ENCODE measurements at regions of chr10 and their contacts with region 1.

Region 1: GRCh38 chr10:74081192-74081803 is 69.3 kb downstream of the AP3M1 start:
- DNase-seq: no peak
- ATAC-seq: peak; percentile 51
- H3K4me3 Mint-ChIP-seq: no peak overlapping the region
- H3K27ac Mint-ChIP-seq: no peak overlapping the region
- H3K4me1 Mint-ChIP-seq: peaks cover 44% of the 10 kb centered on the region
- H3K27me3 Mint-ChIP-seq: no peaks in the 10 kb centered on the region
- CTCF ChIP-seq: no peak

Region 2: DNA sequence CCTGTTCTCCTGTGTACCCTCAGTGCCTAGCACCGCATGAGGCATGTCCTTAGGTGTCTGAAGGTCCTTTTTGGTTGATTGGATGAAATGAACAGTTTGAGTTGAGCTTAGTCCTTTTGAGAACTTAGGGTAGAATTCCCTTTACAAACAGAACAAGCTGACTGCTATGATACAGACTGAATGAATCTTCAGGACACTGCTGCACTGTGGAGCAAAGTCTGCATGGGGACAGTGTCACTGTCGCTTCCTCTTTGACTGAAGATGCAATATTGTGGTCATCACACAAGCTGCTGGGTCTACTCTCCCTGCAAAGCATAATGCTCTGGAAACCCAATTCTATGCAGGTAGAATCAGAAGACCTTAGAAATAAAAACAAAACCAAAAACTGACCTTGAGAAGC is 178.9 kb before region 1 on chr10:
- CTCF ChIA-PET with region 1: no interaction called
- POLR2A ChIA-PET with region 1: no interaction called
- intact Hi-C with region 1: no loop called
- DNase-seq: no peak
- ATAC-seq: no peak
- H3K4me3 Mint-ChIP-seq: no peak overlapping the region
- H3K27ac Mint-ChIP-seq: no peak overlapping the region
- H3K4me1 Mint-ChIP-seq: peaks cover 5% of the 10 kb centered on the region
- H3K27me3 Mint-ChIP-seq: peaks cover 19% of the 10 kb centered on the region
- CTCF ChIP-seq: no peak

Region 3: GRCh38 chr10:73997787-73998622 is 83.3 kb before region 1 on chr10 and contains the start of gene VCL:
- CTCF ChIA-PET with region 1: interaction called, 4 read pairs
- POLR2A ChIA-PET with region 1: interaction called, 5 read pairs
- intact Hi-C with region 1: loop called (anchors 5 kb)
- DNase-seq: peak; percentile 91
- ATAC-seq: peak; percentile 97
- H3K4me3 Mint-ChIP-seq: peak within 1 kb of the TSS; percentile 96
- H3K27ac Mint-ChIP-seq: peak within 1 kb of the TSS; percentile 95
- H3K4me1 Mint-ChIP-seq: peaks cover 45% of the 10 kb centered on the region
- H3K27me3 Mint-ChIP-seq: no peaks in the 10 kb centered on the region
- CTCF ChIP-seq: no peak
- total RNA-seq, gene VCL: 21.3 and 25.8 TPM in 2 replicates

Region 4: DNA sequence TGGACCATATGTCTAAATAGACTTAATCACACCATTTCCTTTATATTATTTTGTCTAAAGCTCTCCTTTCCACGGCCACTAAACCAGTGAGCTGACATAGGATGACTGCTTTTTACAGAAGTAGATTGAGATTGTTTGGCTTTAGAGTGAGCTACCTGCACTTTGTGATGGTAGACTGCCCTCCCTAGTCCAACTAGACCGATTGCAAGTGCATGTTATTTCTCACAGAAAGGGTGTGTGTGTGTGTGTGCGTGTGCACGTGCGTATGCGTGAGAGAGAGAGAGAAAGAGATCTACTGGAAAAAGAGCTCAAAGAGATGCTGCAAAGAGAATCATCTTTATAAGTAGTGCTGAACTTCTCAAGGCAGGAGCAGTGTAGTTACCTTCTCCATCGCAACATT is 22.6 kb before region 1 on chr10:
- CTCF ChIA-PET with region 1: interaction called, 5 read pairs
- POLR2A ChIA-PET with region 1: interaction called, 3 read pairs
- intact Hi-C with region 1: loop called (anchors 2 kb)
- DNase-seq: no peak
- ATAC-seq: peak; percentile 73
- H3K4me3 Mint-ChIP-seq: no peak overlapping the region
- H3K27ac Mint-ChIP-seq: no peak overlapping the region
- H3K4me1 Mint-ChIP-seq: peaks cover 24% of the 10 kb centered on the region
- H3K27me3 Mint-ChIP-seq: no peaks in the 10 kb centered on the region
- CTCF ChIP-seq: no peak

Region 5: DNA sequence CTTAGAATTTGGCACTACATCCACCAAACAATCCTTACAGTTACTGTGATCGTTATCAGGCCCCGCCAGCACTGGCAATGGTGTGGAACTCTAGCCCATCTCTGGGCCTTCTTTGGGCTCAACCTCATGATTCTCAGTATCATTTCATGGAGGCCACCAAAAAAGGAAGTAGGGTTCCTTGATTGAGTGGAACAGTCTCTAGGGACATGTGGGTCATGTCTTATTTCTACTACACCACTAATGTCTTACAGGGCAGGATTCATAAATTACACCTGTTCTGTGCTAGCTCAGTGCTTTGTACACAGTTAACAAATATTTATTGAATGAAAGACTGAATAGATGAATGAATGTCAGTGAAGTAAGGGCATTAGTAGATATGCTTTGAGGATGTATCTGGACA is 15.5 kb after region 1 on chr10:
- CTCF ChIA-PET with region 1: interaction called, 4 read pairs
- POLR2A ChIA-PET with region 1: no interaction called
- intact Hi-C with region 1: loop called (anchors 2 kb)
- DNase-seq: no peak
- ATAC-seq: peak; percentile 98
- H3K4me3 Mint-ChIP-seq: peak overlapping the region; percentile 28
- H3K27ac Mint-ChIP-seq: peak overlapping the region; percentile 78
- H3K4me1 Mint-ChIP-seq: peaks cover 22% of the 10 kb centered on the region
- H3K27me3 Mint-ChIP-seq: no peaks in the 10 kb centered on the region
- CTCF ChIP-seq: no peak